ENCODE measurements at regions of chr7 and their contacts with region 1.

Region 1: GRCh38 chr7:141674702-141675101 is 27.3 kb downstream of the DENND11 start:
- DNase-seq: no peak
- H3K4me3 Mint-ChIP-seq: no peak overlapping the region
- H3K27ac Mint-ChIP-seq: peak overlapping the region; percentile 75
- H3K4me1 Mint-ChIP-seq: peaks cover 45% of the 10 kb centered on the region
- H3K27me3 Mint-ChIP-seq: no peaks in the 10 kb centered on the region

Region 2: DNA sequence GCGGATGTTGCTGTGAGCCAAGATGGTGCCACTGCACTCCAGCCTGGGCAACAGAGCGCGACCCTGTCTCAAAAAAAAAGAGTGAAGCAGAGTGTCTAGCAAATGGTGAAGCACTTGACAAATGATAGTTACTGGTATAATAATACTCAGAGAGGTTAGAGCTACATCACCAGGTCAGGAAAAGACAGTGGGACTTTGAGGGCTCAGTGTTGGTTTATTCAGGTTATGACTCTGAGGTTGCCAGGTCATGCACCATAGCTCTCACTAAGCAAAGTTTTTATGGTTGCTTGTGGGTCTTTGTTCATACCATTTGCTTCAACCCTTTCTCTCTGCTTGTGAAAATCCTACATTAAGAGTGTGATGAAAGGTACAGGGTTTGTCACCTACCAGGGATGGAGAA is 673.6 kb before region 1 on chr7:
- intact Hi-C with region 1: no loop called
- DNase-seq: no peak
- H3K4me3 Mint-ChIP-seq: no peak overlapping the region
- H3K27ac Mint-ChIP-seq: no peak overlapping the region
- H3K4me1 Mint-ChIP-seq: no peaks in the 10 kb centered on the region
- H3K27me3 Mint-ChIP-seq: peaks cover 18% of the 10 kb centered on the region

Region 3: GRCh38 chr7:141558544-141559183 is 116.0 kb before region 1 on chr7:
- intact Hi-C with region 1: loop called (anchors 2 kb)
- DNase-seq: peak; percentile 31
- H3K4me3 Mint-ChIP-seq: peak overlapping the region; percentile 60
- H3K27ac Mint-ChIP-seq: peak overlapping the region; percentile 94
- H3K4me1 Mint-ChIP-seq: peaks cover 83% of the 10 kb centered on the region
- H3K27me3 Mint-ChIP-seq: no peaks in the 10 kb centered on the region

Region 4: DNA sequence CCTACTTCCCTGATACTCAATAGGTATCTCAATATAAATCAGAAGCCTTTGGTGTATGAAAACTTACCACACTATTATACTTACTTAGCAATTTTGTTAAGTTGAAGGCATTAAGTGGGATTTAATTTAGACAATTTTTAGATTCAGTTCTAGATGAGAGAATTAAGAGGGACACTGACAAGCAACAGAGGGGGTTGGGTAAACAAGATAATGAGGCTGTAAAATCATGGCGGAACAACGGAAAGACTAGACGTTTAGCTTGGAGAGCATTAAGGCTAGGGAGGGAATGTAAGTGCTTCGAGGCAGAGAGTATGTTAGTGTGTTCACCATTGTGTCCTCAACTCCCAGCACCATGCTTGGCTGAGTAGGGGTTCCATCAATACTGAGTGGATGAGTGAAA is 44.1 kb before region 1 on chr7:
- intact Hi-C with region 1: no loop called
- DNase-seq: no peak
- H3K4me3 Mint-ChIP-seq: no peak overlapping the region
- H3K27ac Mint-ChIP-seq: no peak overlapping the region
- H3K4me1 Mint-ChIP-seq: no peaks in the 10 kb centered on the region
- H3K27me3 Mint-ChIP-seq: no peaks in the 10 kb centered on the region

Region 5: DNA sequence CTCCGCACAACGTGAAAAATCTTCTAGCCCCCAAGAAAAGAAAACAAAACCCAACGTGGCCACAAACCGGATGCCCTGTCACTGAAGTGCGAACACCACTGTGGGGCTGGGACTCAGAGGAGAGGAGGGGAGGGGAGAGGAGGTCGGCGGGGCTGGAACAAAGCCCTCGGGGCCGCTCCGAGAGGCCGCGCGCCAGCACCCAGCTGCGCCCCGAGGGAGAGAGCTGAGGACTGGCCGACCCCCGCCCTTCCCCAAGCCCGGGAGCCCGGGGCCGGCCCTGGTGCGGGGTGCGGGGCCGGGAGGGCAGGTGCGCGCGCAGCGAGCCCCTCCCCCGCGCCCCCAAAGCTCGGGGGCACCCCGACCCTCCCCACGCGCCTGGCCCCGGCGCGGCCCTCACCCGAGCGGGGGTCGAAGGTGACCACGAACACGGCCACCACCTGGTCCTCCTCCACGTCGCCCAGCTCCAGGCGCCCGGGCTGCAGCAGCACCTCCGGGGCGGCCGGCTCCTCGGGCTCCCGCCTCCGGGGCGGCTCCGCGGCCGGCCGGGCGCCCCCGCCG is 26.9 kb after region 1 on chr7:
- intact Hi-C with region 1: loop called (anchors 1 kb)
- DNase-seq: peak; percentile 69
- H3K4me3 Mint-ChIP-seq: peak overlapping the region; percentile 69
- H3K27ac Mint-ChIP-seq: peak overlapping the region; percentile 58
- H3K4me1 Mint-ChIP-seq: peaks cover 49% of the 10 kb centered on the region
- H3K27me3 Mint-ChIP-seq: peaks cover 5% of the 10 kb centered on the region